Activated B cell treated with CpG ODN at 0.5 μM for 24 hours (primary cell): ENCODE measurements at regions of chr1 and their contacts with region 1.

Region 1: DNA sequence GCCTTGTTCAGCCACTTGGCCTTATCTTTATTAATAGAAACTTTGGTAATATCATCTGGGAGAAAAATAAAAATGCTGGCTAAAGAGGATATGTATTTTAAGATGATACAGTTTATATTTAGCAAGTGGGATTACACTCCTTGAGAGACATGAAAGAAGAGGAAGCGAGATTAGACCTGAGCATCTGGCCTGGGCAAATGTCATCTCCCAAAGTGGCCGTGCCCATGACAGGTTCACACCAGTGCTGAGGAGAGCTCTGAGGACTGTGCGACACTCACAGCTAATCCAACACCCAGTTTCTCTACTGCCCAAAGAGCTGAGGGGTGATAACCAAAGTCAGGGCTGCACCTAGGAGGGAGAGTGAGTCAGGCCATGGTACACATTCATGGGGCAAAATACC is 121.7 kb upstream of the DUSP10 start:
- DNase-seq: no peak
- ATAC-seq: no peak
- H3K4me3 Mint-ChIP-seq: no peak overlapping the region
- H3K27ac Mint-ChIP-seq: no peak overlapping the region
- H3K4me1 Mint-ChIP-seq: peaks cover 8% of the 10 kb centered on the region
- H3K27me3 Mint-ChIP-seq: no peaks in the 10 kb centered on the region
- CTCF ChIP-seq: no peak

Region 2: GRCh38 chr1:221816899-221817298 is 46.7 kb before region 1 on chr1:
- CTCF ChIA-PET with region 1: no interaction called
- POLR2A ChIA-PET with region 1: no interaction called
- intact Hi-C with region 1: no loop called
- DNase-seq: no peak
- ATAC-seq: no peak
- H3K4me3 Mint-ChIP-seq: no peak overlapping the region
- H3K27ac Mint-ChIP-seq: no peak overlapping the region
- H3K4me1 Mint-ChIP-seq: peaks cover 5% of the 10 kb centered on the region
- H3K27me3 Mint-ChIP-seq: no peaks in the 10 kb centered on the region
- CTCF ChIP-seq: no peak

Region 3: DNA sequence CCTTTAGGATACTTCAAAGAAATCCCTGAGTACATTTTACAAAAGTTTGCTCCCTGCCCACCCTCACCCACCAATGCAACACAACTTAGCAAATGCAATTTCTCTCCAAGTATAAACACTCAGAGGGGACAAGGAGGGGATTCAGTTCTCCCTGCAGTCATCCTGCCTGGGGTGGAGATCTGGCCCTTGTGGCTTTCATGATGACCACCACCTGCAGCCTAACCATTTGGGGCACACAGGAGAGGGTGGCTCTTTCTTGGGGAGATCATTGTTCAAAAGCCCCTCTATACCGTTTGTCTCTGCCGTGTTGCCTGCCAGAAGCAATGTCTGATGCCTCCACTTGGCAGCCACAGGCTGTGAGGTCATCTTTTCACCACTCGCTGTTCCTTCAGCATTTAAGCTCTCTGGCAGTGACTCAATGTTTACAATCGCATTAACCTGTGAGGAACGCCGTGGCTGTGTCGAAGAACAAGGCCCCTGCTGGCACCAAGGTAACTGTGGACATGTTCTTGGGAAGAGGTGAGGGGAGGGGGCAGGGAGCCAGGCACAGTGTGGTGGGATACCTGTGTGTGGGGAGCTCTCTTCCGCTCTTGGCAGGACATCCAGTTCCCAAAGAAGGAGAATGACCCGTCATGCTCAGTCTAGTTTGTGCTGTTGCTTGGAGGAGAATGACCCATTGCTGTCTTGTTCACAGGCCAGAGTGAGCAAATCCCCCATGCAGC is 17.8 kb before region 1 on chr1:
- CTCF ChIA-PET with region 1: no interaction called
- POLR2A ChIA-PET with region 1: interaction called, 4 read pairs
- intact Hi-C with region 1: loop called (anchors 2 kb)
- DNase-seq: no peak
- ATAC-seq: no peak
- H3K4me3 Mint-ChIP-seq: no peak overlapping the region
- H3K27ac Mint-ChIP-seq: peak overlapping the region; percentile 27
- H3K4me1 Mint-ChIP-seq: peaks cover 12% of the 10 kb centered on the region
- H3K27me3 Mint-ChIP-seq: no peaks in the 10 kb centered on the region
- CTCF ChIP-seq: no peak

Region 4: DNA sequence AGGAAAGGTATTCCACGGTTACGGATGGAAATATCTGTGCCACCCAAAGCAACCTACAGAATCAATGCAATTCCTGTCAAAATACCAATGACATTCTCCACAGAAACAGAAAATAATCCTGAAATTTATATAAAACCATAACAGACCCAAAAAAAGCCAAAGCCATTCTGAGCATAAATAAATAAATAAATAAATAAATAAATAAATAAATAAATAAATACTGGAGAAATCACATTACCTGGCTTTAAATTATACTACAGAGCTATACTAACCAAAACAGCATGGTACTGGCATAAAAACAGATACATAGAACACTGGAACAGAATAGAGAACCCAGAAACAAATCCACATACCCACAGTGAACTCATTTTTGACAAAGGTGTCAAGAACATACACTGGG is 70.2 kb after region 1 on chr1:
- CTCF ChIA-PET with region 1: no interaction called
- POLR2A ChIA-PET with region 1: no interaction called
- intact Hi-C with region 1: no loop called
- DNase-seq: no peak
- ATAC-seq: no peak
- H3K4me3 Mint-ChIP-seq: no peak overlapping the region
- H3K27ac Mint-ChIP-seq: no peak overlapping the region
- H3K4me1 Mint-ChIP-seq: peaks cover 17% of the 10 kb centered on the region
- H3K27me3 Mint-ChIP-seq: no peaks in the 10 kb centered on the region
- CTCF ChIP-seq: no peak